Esophagus squamous epithelium (tissue), 5 donors: ENCODE measurements at regions of chr6 and their contacts with region 1.

Region 1: GRCh38 chr6:33768644-33769120 is 20.2 kb downstream of the LEMD2 start:
- DNase-seq: no peak
- H3K4me3 ChIP-seq: no peak overlapping the region
- H3K27ac ChIP-seq: peak overlapping the region in 2 of 4 donors; percentile 41 to 83
- H3K4me1 ChIP-seq: peaks cover 19 to 52% (median 36%) of the 10 kb centered on the region in 3 donors
- H3K27me3 ChIP-seq: no peaks in the 10 kb centered on the region
- CTCF ChIP-seq: peak; percentile 49 to 85 (median 80)
- POLR2A ChIP-seq: no peak

Region 2: GRCh38 chr6:33061987-33062386 is 706.7 kb before region 1 on chr6:
- intact Hi-C with region 1: no loop called
- DNase-seq: no peak
- H3K4me3 ChIP-seq: no peak overlapping the region
- H3K27ac ChIP-seq: no peak overlapping the region
- H3K4me1 ChIP-seq: no peaks in the 10 kb centered on the region
- H3K27me3 ChIP-seq: peaks cover 0 to 11% (median 0%) of the 10 kb centered on the region in 4 donors
- CTCF ChIP-seq: no peak
- POLR2A ChIP-seq: no peak

Region 3: GRCh38 chr6:33633462-33634158 is 135.1 kb before region 1 on chr6:
- intact Hi-C with region 1: no loop called
- DNase-seq: no peak
- H3K4me3 ChIP-seq: peak overlapping the region; percentile 17 to 68 (median 48)
- H3K27ac ChIP-seq: peak overlapping the region; percentile 67 to 75 (median 68)
- H3K4me1 ChIP-seq: peaks cover 30 to 56% (median 32%) of the 10 kb centered on the region in 3 donors
- H3K27me3 ChIP-seq: no peaks in the 10 kb centered on the region
- CTCF ChIP-seq: no peak
- POLR2A ChIP-seq: peak in 1 of 4 donors; percentile 8

Region 4: DNA sequence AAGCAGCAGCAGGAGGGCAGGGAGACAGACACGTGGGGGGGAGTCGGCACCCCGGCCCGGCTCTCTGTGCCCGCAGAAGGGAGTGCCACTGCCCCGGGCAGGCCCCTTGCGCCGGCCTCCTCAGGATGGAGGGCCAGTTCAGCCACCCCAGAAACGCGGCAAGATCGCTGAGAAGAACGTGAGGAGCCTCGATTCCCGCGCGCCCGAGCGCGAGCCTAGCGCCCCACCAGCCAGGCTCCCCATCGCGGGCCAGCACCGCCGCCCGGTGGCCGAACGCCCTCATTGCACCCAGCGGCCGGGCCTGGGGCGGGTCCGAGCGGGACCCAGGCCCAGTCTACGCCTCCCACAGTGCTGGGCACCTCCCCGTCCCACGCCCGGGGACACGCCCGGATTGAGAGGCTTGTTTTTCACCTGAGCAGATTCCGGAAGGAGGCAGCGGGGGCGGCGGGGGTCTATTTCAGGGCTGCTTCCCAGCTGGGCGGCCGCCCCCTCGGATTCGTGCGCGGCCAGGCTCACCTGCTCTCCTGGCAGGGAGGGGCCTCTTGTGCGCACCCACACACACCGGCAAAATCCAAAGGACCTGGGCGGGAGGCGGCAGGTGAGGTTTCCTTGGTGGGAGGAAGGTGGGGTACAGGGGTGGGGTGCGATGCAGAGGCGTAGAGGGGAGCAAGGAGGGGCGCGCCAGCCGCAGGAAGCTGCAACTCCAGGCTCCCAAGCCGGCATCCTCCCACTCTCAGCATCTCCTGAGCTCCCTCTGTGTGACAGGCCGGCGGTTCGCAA is 386.2 kb after region 1 on chr6:
- intact Hi-C with region 1: loop called (anchors 10 kb)
- DNase-seq: no peak
- H3K4me3 ChIP-seq: peak overlapping the region in 2 of 4 donors; percentile 20 to 49
- H3K27ac ChIP-seq: no peak overlapping the region
- H3K4me1 ChIP-seq: peaks cover 6 to 11% (median 8%) of the 10 kb centered on the region in 3 donors
- H3K27me3 ChIP-seq: peaks cover 0 to 70% (median 15%) of the 10 kb centered on the region in 4 donors
- CTCF ChIP-seq: peak; percentile 87 to 99 (median 97)
- POLR2A ChIP-seq: no peak